Calu3 (cell line): ENCODE measurements at regions of chr3 and their contacts with region 1.

Region 1: DNA sequence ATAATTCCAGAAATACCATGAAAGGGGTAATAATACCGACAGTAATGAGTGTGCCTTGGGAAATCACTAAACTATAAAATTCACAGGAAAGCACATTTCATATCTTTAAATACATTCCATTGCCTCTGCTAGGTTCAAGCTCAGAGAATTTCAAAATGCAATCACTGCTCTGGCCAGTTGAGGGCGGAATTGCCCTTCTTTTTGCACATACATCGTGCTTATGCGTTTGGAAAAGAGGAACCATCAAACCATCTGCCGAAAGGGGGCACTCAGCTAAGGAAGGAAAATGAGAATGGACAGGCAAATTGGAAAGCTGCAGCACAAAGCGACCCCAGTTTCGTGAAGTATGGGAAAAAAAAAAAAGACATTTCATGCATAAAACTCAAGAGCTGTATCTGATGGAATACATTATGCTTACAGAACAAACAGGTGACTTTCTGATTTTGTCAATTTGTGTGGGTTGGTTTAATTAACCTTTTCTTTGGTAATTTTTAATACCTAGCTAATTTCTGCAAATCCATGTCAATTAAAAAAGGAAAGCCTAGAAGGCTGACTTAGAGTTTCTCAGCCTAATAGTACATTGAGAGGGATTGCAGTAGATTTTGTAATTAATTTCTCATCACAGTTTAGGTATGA is 61.4 kb downstream of the TUSC7 start:
- DNase-seq: peak; percentile 77
- H3K4me3 Mint-ChIP-seq: no peak overlapping the region
- H3K27ac Mint-ChIP-seq: no peak overlapping the region
- H3K4me1 Mint-ChIP-seq: no peaks in the 10 kb centered on the region
- H3K27me3 Mint-ChIP-seq: peaks cover 13% of the 10 kb centered on the region
- CTCF ChIP-seq: peak; percentile 83

Region 2: GRCh38 chr3:116836286-116836685 is 65.4 kb after region 1 on chr3:
- CTCF ChIA-PET with region 1: interaction called, 14 read pairs
- intact Hi-C with region 1: no loop called
- DNase-seq: no peak
- H3K4me3 Mint-ChIP-seq: no peak overlapping the region
- H3K27ac Mint-ChIP-seq: no peak overlapping the region
- H3K4me1 Mint-ChIP-seq: no peaks in the 10 kb centered on the region
- H3K27me3 Mint-ChIP-seq: no peaks in the 10 kb centered on the region
- CTCF ChIP-seq: no peak

Region 3: GRCh38 chr3:117355566-117355965 is 584.6 kb after region 1 on chr3:
- CTCF ChIA-PET with region 1: no interaction called
- intact Hi-C with region 1: loop called (anchors 2 kb)
- DNase-seq: peak; percentile 27
- H3K4me3 Mint-ChIP-seq: no peak overlapping the region
- H3K27ac Mint-ChIP-seq: no peak overlapping the region
- H3K4me1 Mint-ChIP-seq: no peaks in the 10 kb centered on the region
- H3K27me3 Mint-ChIP-seq: no peaks in the 10 kb centered on the region
- CTCF ChIP-seq: peak; percentile 32

Region 4: GRCh38 chr3:117526470-117527079 is 755.6 kb after region 1 on chr3:
- CTCF ChIA-PET with region 1: interaction called, 7 read pairs
- intact Hi-C with region 1: loop called (anchors 5 kb)
- DNase-seq: peak; percentile 49
- H3K4me3 Mint-ChIP-seq: no peak overlapping the region
- H3K27ac Mint-ChIP-seq: no peak overlapping the region
- H3K4me1 Mint-ChIP-seq: no peaks in the 10 kb centered on the region
- H3K27me3 Mint-ChIP-seq: no peaks in the 10 kb centered on the region
- CTCF ChIP-seq: no peak

Region 5: DNA sequence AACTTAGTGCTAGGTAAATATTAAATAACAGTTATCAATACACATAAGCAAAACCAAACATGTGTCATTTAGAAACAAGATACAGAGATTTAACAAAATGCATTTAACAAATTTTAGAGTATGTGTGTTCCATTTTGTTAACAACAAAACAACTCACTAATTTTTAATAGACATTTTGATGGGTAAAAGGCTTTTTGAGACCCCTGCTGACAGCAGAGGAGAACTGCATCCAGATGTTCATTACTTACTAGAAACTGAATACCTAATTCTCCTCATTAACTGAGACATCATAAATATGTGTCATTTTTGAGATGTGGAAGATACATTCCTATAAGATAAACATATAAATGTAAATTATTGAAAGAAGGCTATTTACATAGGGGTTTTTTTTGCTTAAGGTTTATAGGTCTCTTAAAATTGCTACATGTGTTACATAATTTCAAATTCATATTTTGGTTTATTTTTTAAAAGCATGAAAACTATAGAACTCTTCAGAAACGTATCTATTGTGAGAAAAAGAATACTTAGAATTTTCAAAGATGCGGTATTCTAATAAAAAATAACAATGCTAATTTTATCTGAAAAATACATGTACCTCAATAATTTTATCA is 948.5 kb after region 1 on chr3:
- CTCF ChIA-PET with region 1: no interaction called
- intact Hi-C with region 1: loop called (anchors 2 kb)
- DNase-seq: peak; percentile 18
- H3K4me3 Mint-ChIP-seq: no peak overlapping the region
- H3K27ac Mint-ChIP-seq: no peak overlapping the region
- H3K4me1 Mint-ChIP-seq: no peaks in the 10 kb centered on the region
- H3K27me3 Mint-ChIP-seq: no peaks in the 10 kb centered on the region
- CTCF ChIP-seq: peak; percentile 37